Activated B cell treated with CpG ODN at 0.5 μM for 24 hours (primary cell): ENCODE measurements at regions of chr3 and their contacts with region 1.

Region 1: GRCh38 chr3:141412087-141412935 is 44.0 kb downstream of the ZBTB38 start:
- DNase-seq: no peak
- ATAC-seq: peak; percentile 75
- H3K4me3 Mint-ChIP-seq: peak overlapping the region; percentile 86
- H3K27ac Mint-ChIP-seq: peak overlapping the region; percentile 97
- H3K4me1 Mint-ChIP-seq: peaks cover 44% of the 10 kb centered on the region
- H3K27me3 Mint-ChIP-seq: no peaks in the 10 kb centered on the region
- CTCF ChIP-seq: no peak

Region 2: GRCh38 chr3:141370065-141370533 is 42.2 kb before region 1 on chr3:
- CTCF ChIA-PET with region 1: no interaction called
- POLR2A ChIA-PET with region 1: interaction called, 3 read pairs
- intact Hi-C with region 1: loop called (anchors 1 kb)
- DNase-seq: no peak
- ATAC-seq: peak; percentile 99
- H3K4me3 Mint-ChIP-seq: no peak overlapping the region
- H3K27ac Mint-ChIP-seq: peak overlapping the region; percentile 15
- H3K4me1 Mint-ChIP-seq: peaks cover 13% of the 10 kb centered on the region
- H3K27me3 Mint-ChIP-seq: no peaks in the 10 kb centered on the region
- CTCF ChIP-seq: no peak

Region 3: DNA sequence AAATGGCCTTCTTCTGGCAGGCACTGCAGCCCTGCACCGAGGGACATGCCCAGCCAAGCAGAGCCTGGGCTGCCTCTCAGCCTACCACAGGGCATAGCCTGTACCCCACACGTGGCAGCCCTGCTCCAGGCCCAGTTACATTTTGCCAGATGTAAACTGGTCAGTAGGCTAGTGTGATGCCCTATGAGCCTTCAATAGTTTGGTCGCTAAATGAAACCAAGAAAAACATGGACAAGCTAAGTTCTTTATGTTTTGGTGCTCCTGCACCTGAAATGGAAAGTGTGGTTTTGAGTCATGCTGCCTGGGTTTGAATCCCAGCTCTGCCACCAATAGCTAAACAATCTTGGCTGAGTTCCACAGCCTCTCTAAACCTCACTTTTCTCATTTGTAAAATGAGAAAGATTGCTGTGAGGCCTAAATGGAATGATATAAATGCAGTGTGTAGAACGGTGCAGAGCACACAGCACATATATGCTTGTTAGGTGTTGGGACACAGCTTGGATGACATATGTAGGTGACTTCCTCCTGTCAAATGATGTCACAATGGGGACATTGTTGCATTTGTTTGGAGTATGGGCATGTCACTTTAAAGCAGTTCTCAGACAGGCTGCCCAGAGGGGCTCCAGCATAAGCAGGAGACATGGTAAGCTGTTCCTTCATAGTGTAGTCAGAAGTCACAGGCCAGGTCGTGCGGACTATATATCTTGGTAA is 13.4 kb after region 1 on chr3:
- CTCF ChIA-PET with region 1: interaction called, 5 read pairs
- POLR2A ChIA-PET with region 1: no interaction called
- intact Hi-C with region 1: loop called (anchors 1 kb)
- DNase-seq: no peak
- ATAC-seq: no peak
- H3K4me3 Mint-ChIP-seq: no peak overlapping the region
- H3K27ac Mint-ChIP-seq: no peak overlapping the region
- H3K4me1 Mint-ChIP-seq: peaks cover 6% of the 10 kb centered on the region
- H3K27me3 Mint-ChIP-seq: no peaks in the 10 kb centered on the region
- CTCF ChIP-seq: no peak